Pancreas (tissue), 10 donors: ENCODE measurements at regions of chr1 and their contacts with region 1.

Region 1: GRCh38 chr1:151994956-151995355 is 1.3 kb upstream of the S100A10 start:
- DNase-seq: peak in 1 of 6 donors; percentile 23
- ATAC-seq: no peak
- H3K4me3 ChIP-seq: no peak overlapping the region
- H3K27ac ChIP-seq: peak overlapping the region in 1 of 4 donors; percentile 91
- H3K4me1 ChIP-seq: peaks cover 0 to 22% (median 13%) of the 10 kb centered on the region in 3 donors
- H3K27me3 ChIP-seq: no peaks in the 10 kb centered on the region
- CTCF ChIP-seq: no peak

Region 2: DNA sequence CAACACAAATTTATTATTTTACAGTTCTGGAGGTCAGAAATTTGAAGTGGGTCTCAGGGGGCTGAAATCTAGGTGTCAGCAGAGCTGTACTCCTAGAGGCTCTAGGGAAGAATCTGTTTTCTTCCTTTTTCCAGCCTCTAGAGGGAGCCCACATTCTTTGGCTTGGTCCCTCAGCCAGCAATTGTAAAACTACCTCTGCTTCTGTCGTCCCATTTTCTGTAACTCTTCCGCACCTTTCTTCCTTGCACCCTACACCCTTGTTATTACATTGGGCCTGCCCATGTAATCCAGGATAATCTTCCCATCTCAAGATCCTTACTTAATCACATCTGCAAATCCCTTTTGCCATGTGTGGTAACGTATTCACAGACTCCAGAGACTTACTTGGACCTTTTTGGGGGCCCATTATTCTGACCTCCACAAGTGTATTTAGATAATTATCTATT is 60.9 kb before region 1 on chr1:
- intact Hi-C with region 1: loop called in 2 of 3 experiments (anchors 2 to 5 kb)
- DNase-seq: peak in 1 of 6 donors; percentile 54
- ATAC-seq: peak; percentile 82 to 97 (median 94)
- H3K4me3 ChIP-seq: no peak overlapping the region
- H3K27ac ChIP-seq: no peak overlapping the region
- H3K4me1 ChIP-seq: peaks cover 0 to 6% (median 5%) of the 10 kb centered on the region in 3 donors
- H3K27me3 ChIP-seq: peaks cover 0 to 2% (median 0%) of the 10 kb centered on the region in 4 donors
- CTCF ChIP-seq: peak; percentile 41 to 82 (median 74)

Region 3: DNA sequence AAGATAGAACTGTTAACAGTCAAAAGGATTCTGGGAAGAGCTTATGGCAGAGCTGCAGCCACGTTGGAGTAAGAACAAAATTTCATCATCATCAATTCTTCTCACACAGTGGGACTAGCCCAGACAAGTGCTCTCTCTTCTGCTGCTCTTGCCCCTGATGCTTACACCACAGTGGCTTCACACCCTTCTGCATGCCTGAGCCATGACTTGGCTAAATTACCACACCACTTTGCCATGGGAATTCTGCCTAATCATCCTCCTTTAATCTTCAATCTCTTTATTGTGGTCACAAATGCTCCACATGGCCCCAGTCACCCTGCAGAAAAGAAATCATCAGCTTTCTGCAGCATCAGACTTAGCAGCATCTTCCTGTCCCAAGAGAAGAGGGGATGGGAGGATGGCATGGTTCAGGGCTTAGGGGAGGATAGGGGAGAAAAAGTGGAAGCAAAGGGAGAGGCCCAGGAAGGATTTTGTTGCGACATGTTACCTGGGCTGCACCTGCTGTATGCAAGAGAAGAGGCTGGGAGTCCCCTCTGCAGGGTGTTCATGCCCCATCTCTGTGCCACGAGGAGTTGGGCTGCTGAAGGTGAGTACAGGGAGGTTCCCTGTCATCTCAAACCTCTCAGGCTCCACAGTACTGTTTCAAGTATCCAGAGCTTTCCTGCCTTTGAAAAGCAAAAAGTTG is 173.0 kb after region 1 on chr1:
- intact Hi-C with region 1: no loop called
- DNase-seq: no peak
- ATAC-seq: peak in 2 of 4 donors; percentile 46 to 59
- H3K4me3 ChIP-seq: no peak overlapping the region
- H3K27ac ChIP-seq: no peak overlapping the region
- H3K4me1 ChIP-seq: no peaks in the 10 kb centered on the region
- H3K27me3 ChIP-seq: no peaks in the 10 kb centered on the region
- CTCF ChIP-seq: no peak